Right ventricle myocardium superior (tissue), 1 donor: ENCODE measurements at regions of chr9 and their contacts with region 1.

Region 1: GRCh38 chr9:72356041-72356582 is 8.9 kb downstream of the ZFAND5 start:
- DNase-seq: no peak
- ATAC-seq: peak; percentile 13

Region 2: DNA sequence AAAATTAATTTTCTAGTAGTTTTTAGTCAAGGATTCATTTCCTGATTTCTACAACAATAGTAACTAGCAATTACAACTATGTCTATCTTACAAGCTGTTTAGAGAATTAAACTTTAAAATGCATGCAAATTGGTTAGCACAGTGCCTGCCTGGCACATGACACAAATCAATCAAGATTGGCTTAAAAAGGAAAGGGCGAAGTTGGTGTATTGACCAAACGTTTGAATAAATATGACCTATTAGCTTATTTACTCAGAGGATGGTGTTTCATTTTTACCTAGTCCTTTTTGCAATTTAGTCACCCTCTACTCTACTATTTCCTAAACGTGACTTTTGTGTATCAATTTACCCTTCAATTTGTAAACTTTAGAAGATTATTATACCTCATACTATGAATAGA is 123.3 kb before region 1 on chr9:
- intact Hi-C with region 1: no loop called
- DNase-seq: no peak
- ATAC-seq: no peak

Region 3: GRCh38 chr9:72305102-72305546 is 51.0 kb before region 1 on chr9:
- intact Hi-C with region 1: loop called (anchors 10 kb)
- DNase-seq: peak; percentile 87
- ATAC-seq: peak; percentile 99